CD4-positive, alpha-beta memory T cell (primary cell): ENCODE measurements at regions of chr10 and their contacts with region 1.

Region 1: GRCh38 chr10:14971867-14972448 is 12.8 kb downstream of the MEIG1 start:
- DNase-seq: peak in 4 of 5 donors; percentile 38 to 48 (median 44)
- H3K4me3 ChIP-seq: no peak overlapping the region
- H3K4me3 Mint-ChIP-seq: no peak overlapping the region
- H3K27ac ChIP-seq: no peak overlapping the region
- H3K27ac Mint-ChIP-seq: no peak overlapping the region
- H3K4me1 ChIP-seq: peaks cover 3% of the 10 kb centered on the region
- H3K4me1 Mint-ChIP-seq: peaks cover 0 to 6% (median 3%) of the 10 kb centered on the region in 4 donors
- H3K27me3 ChIP-seq: no peaks in the 10 kb centered on the region
- H3K27me3 Mint-ChIP-seq: peaks cover 13 to 21% of the 10 kb centered on the region in 2 donors

Region 2: DNA sequence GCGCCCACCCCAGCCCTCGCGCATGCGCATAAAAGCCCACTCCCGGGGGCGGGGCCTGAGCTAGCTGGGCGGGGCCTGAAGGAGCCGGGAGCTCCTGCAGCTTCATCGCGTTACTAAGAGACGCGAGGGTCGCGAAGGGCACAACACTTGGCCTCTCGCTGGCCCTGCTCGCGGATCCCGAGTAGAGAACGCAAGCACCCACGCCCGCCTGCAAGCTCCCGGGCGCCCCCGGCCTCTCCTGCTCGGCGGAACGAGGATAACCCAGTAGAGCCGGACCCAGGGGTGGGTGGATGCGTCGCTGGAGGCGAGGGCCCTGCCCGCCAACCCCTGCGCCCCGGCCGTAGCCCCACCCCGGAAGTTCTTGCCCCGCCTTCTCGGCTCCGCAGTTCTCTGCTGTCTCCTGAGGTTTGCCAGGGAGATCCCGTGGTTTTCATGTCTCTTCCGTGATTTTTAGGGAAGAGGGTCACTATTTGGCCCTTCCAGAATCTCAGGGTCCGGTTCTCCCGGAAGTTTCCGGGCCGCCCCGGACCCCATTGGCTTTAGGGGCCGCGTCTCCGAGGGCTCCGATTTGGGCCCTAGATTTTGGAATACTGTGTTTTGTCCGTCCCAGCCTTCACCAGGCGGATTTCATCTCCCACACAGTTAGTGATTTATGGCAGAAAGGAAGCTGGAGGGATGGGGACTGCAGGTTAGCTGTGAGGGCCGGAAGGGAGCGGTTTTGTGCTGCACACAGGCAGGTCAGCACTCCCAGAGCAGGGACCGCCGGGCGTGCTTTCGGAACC is 12.5 kb before region 1 on chr10 and contains the start of gene MEIG1:
- CTCF ChIA-PET with region 1: interaction called, 22 read pairs
- POLR2A ChIA-PET with region 1: interaction called, 3 read pairs
- intact Hi-C with region 1: no loop called
- DNase-seq: peak; percentile 87 to 92 (median 88)
- H3K4me3 ChIP-seq: peak within 1 kb of the TSS; percentile 79 to 98
- H3K4me3 Mint-ChIP-seq: peak within 1 kb of the TSS; percentile 93 to 99 (median 96)
- H3K27ac ChIP-seq: peak within 1 kb of the TSS; percentile 92
- H3K27ac Mint-ChIP-seq: peak within 1 kb of the TSS; percentile 93 to 99 (median 96)
- H3K4me1 ChIP-seq: peaks cover 14% of the 10 kb centered on the region
- H3K4me1 Mint-ChIP-seq: peaks cover 20 to 40% (median 29%) of the 10 kb centered on the region in 4 donors
- H3K27me3 ChIP-seq: no peaks in the 10 kb centered on the region
- H3K27me3 Mint-ChIP-seq: no peaks in the 10 kb centered on the region
- total RNA-seq, gene MEIG1: not detected

Region 3: DNA sequence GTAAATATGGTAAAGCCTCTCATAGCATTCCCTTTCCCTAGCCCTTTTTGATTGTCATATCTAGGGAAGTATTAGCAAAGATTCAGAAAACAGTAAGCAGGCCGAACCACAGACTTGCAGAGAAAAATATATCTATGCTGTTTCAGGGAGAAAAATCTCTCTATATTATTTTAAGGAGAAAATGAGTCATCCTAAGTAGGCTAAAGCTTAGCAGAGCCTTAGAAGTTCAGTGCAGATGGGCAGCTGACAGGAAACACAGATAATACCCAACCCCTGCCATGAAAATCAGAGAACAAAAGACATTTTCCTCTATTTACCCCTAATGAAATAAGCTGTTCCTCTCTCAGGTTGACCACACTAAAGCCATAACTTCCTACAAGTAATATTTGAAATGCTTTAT is 1533.2 kb after region 1 on chr10:
- CTCF ChIA-PET with region 1: no interaction called
- POLR2A ChIA-PET with region 1: no interaction called
- intact Hi-C with region 1: no loop called
- DNase-seq: no peak
- H3K4me3 ChIP-seq: no peak overlapping the region
- H3K4me3 Mint-ChIP-seq: no peak overlapping the region
- H3K27ac ChIP-seq: no peak overlapping the region
- H3K27ac Mint-ChIP-seq: no peak overlapping the region
- H3K4me1 ChIP-seq: no peaks in the 10 kb centered on the region
- H3K4me1 Mint-ChIP-seq: peaks cover 0 to 7% (median 0%) of the 10 kb centered on the region in 4 donors
- H3K27me3 ChIP-seq: no peaks in the 10 kb centered on the region
- H3K27me3 Mint-ChIP-seq: no peaks in the 10 kb centered on the region